K562 (cell line): ENCODE measurements at regions of chr18 and their contacts with region 1.

Region 1: DNA sequence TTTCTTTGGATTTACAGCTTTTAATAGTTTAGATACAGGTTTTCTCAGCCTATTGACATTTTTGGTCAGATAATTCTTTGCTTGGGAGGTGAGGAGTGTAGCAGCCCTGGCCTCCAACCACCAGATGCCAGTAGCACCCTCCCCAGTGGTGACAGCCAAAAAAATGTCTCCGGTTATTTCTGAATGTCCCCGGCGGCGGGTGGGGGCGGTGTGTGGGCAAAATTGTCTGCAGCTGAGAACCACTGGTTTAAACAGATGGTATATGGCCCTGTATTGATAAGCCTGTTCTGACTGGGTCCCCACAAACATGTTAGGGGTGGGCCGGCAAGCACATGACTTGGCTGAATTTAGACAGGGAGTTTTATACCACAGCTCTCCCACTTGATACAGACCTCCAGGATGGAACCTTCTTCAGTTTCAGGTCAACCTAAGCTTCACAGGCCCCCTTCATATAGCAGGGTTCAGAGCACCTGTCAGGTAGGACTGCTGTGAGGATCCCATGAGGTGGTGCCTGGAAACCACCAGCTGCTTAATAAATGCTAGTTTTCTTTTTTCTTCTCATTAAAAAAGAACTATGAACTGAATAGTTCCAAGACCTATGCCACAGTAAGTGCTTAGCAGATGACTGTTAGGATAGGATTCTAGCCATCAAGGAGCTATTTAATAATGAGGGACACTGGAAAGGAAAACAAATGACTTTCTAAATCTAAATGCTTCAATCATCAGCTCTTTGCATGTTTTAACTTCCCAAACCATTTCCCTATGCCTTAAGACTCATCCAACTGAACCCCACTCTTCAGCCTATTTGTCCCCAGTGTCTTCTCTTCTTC is 18.1 kb downstream of the LPIN2 start:
- DNase-seq: peak; percentile 90 to 92 (median 91)
- ATAC-seq: peak; percentile 92
- H3K4me3 ChIP-seq: no peak overlapping the region
- H3K27ac ChIP-seq: peak overlapping the region; percentile 74
- H3K4me1 ChIP-seq: peaks cover 14 to 40% of the 10 kb centered on the region in 2 experiments
- H3K27me3 ChIP-seq: no peaks in the 10 kb centered on the region
- CTCF ChIP-seq: peak; percentile 76 to 95 (median 93)
- EP300 ChIP-seq: peak; percentile 61
- POLR2A ChIP-seq: no peak
- RAD21 ChIP-seq: peak; percentile 82 to 87

Region 2: GRCh38 chr18:2978646-2979045 is 16.2 kb before region 1 on chr18:
- CTCF ChIA-PET with region 1: no interaction called
- POLR2A ChIA-PET with region 1: interaction called, 10 read pairs
- in situ Hi-C with region 1: no loop called
- intact Hi-C with region 1: no loop called
- DNase-seq: no peak
- ATAC-seq: no peak
- H3K4me3 ChIP-seq: no peak overlapping the region
- H3K27ac ChIP-seq: no peak overlapping the region
- H3K4me1 ChIP-seq: peaks cover 6 to 54% of the 10 kb centered on the region in 2 experiments; a peak in 4 of 5 replicates
- H3K27me3 ChIP-seq: no peaks in the 10 kb centered on the region
- CTCF ChIP-seq: no peak
- EP300 ChIP-seq: no peak
- POLR2A ChIP-seq: no peak
- RAD21 ChIP-seq: no peak

Region 3: GRCh38 chr18:3012964-3013804 is 18.4 kb after region 1 on chr18 and contains the start of gene LPIN2:
- CTCF ChIA-PET with region 1: no interaction called
- POLR2A ChIA-PET with region 1: interaction called, 23 read pairs
- in situ Hi-C with region 1: no loop called
- intact Hi-C with region 1: loop called (anchors 2 kb)
- DNase-seq: peak; percentile 97 to 99 (median 98)
- ATAC-seq: peak; percentile 89
- H3K4me3 ChIP-seq: peak within 1 kb of the TSS; percentile 85
- H3K27ac ChIP-seq: peak within 1 kb of the TSS; percentile 93
- H3K4me1 ChIP-seq: peaks cover 25 to 28% of the 10 kb centered on the region in 2 experiments
- H3K27me3 ChIP-seq: no peaks in the 10 kb centered on the region
- CTCF ChIP-seq: no peak
- EP300 ChIP-seq: no peak
- POLR2A ChIP-seq: no peak
- RAD21 ChIP-seq: no peak
- polyA plus RNA-seq, gene LPIN2: 5.2 to 7.6 TPM

Region 4: DNA sequence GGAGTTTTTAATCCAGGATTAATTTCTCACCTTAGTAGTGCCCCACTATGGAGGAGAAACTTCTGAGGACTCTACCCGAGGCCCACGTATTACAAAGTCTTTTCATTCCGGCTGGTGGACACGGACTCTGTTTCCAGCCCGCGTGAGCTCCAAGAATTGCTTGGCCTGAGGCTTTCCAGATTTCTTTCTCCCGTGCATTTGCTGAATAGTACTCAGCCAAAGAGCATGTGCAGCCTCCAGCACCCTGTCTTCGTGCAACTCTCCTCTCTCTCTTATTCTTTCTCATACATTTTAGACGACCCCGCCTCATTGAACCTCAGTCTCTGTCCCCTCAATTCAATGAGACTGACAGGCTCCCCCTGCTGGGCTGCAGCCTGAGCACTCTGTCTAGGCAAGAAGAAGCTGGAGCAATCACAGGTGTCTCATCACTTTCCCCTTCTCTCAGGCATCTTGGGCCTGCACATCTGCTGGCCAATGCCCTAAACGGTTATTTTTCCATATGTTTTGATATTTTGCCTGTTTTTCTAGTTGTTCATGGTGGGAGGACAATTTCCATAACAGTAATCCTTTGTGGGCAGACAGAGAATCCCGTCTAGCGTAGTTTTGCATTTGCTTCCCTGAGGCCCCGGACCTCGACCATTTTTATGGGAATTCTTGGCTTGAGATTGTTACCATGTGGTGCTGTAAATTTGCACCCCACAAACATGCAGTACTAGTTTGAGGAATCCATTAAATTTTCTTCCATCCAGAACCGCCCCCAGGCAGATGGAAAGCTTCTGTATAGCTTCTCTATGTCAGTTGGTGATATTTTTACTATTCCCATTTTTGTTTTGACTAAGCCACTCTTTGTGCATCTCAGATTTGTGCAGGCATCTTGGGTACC is 68.2 kb after region 1 on chr18:
- CTCF ChIA-PET with region 1: no interaction called
- POLR2A ChIA-PET with region 1: interaction called, 7 read pairs
- in situ Hi-C with region 1: no loop called
- intact Hi-C with region 1: loop called (anchors 1 kb)
- DNase-seq: peak; percentile 34 to 80 (median 56)
- ATAC-seq: peak; percentile 94
- H3K4me3 ChIP-seq: no peak overlapping the region
- H3K27ac ChIP-seq: no peak overlapping the region
- H3K4me1 ChIP-seq: peaks cover 4 to 5% of the 10 kb centered on the region in 2 experiments; a peak in 4 of 5 replicates
- H3K27me3 ChIP-seq: no peaks in the 10 kb centered on the region
- CTCF ChIP-seq: peak; percentile 83 to 93 (median 86)
- EP300 ChIP-seq: no peak
- POLR2A ChIP-seq: no peak
- RAD21 ChIP-seq: peak; percentile 74 to 90

Region 5: GRCh38 chr18:3129053-3129864 is 134.4 kb after region 1 on chr18:
- CTCF ChIA-PET with region 1: no interaction called
- POLR2A ChIA-PET with region 1: interaction called, 4 read pairs
- in situ Hi-C with region 1: no loop called
- intact Hi-C with region 1: loop called (anchors 1 kb)
- DNase-seq: peak; percentile 79 to 93 (median 82)
- ATAC-seq: peak; percentile 100
- H3K4me3 ChIP-seq: no peak overlapping the region
- H3K27ac ChIP-seq: no peak overlapping the region
- H3K4me1 ChIP-seq: no peaks in the 10 kb centered on the region; a peak in 2 of 5 replicates
- H3K27me3 ChIP-seq: no peaks in the 10 kb centered on the region
- CTCF ChIP-seq: peak; percentile 98 to 99 (median 99)
- EP300 ChIP-seq: no peak; the same call in 1 of the 2 replicates
- POLR2A ChIP-seq: no peak
- RAD21 ChIP-seq: peak; percentile 81 to 93

Region 6: GRCh38 chr18:3151399-3152264 is 156.8 kb after region 1 on chr18:
- CTCF ChIA-PET with region 1: no interaction called
- POLR2A ChIA-PET with region 1: no interaction called
- in situ Hi-C with region 1: no loop called
- intact Hi-C with region 1: loop called (anchors 2 kb)
- DNase-seq: peak; percentile 52 to 65 (median 62)
- ATAC-seq: peak; percentile 36; the same call in 1 of the 3 replicates
- H3K4me3 ChIP-seq: no peak overlapping the region
- H3K27ac ChIP-seq: no peak overlapping the region
- H3K4me1 ChIP-seq: peaks cover 4 to 5% of the 10 kb centered on the region in 2 experiments; a peak in 2 of 5 replicates
- H3K27me3 ChIP-seq: no peaks in the 10 kb centered on the region
- CTCF ChIP-seq: peak; percentile 70 to 87 (median 70); a peak in 5 of 6 replicates
- EP300 ChIP-seq: no peak
- POLR2A ChIP-seq: no peak
- RAD21 ChIP-seq: peak; percentile 64 to 82

Region 7: GRCh38 chr18:3634250-3634939 is 639.6 kb after region 1 on chr18:
- CTCF ChIA-PET with region 1: no interaction called
- POLR2A ChIA-PET with region 1: no interaction called
- in situ Hi-C with region 1: no loop called
- intact Hi-C with region 1: no loop called
- DNase-seq: no peak
- ATAC-seq: no peak
- H3K4me3 ChIP-seq: no peak overlapping the region
- H3K27ac ChIP-seq: no peak overlapping the region
- H3K4me1 ChIP-seq: peaks cover 15 to 17% of the 10 kb centered on the region in 2 experiments
- H3K27me3 ChIP-seq: no peaks in the 10 kb centered on the region
- CTCF ChIP-seq: no peak
- EP300 ChIP-seq: no peak
- POLR2A ChIP-seq: no peak
- RAD21 ChIP-seq: no peak